ENCODE measurements at regions of chr4 and their contacts with region 1.

Region 1: DNA sequence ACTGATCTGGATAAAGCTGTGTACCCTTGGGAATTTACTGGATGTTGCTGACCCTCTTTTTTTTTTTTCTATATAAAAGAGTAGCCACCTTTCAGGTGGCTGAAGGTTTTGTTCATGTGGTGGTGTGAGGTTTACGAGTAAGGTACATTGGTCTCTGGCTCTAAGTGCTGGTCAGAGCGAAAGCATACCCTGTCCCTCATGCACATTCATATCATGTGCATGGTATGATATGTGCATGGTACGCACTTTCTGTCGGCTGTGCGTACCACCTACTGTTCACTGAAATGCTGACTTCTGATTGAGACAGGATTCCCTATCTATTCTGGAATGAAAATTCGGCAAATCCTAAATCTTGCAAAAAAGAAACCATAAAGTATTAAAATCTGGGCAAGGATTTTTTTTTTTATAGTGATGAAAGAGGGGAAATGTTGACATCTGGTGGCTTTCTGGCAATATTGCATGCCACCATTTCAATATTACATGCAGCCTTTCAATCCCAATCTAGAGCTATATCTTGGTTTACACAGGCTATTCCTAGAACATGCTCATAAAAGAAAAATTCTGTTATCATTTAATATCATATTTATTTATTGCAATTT is 32.8 kb downstream of the FAM149A start:
- DNase-seq: no peak
- ATAC-seq: peak; percentile 54
- H3K4me3 ChIP-seq: no peak overlapping the region
- H3K27ac ChIP-seq: no peak overlapping the region
- H3K4me1 ChIP-seq: peaks cover 15% of the 10 kb centered on the region
- H3K27me3 ChIP-seq: no peaks in the 10 kb centered on the region
- CTCF ChIP-seq: peak; percentile 45 to 68 (median 66); a peak in 5 of 6 replicates
- EP300 ChIP-seq: no peak
- POLR2A ChIP-seq: no peak
- RAD21 ChIP-seq: peak; percentile 74

Region 2: GRCh38 chr4:186037692-186038658 is 99.3 kb before region 1 on chr4:
- CTCF ChIA-PET with region 1: interaction called, 11 read pairs
- POLR2A ChIA-PET with region 1: no interaction called
- RAD21 ChIA-PET with region 1: interaction called, 3 read pairs
- SMC1A ChIA-PET with region 1: interaction called, 6 read pairs
- in situ Hi-C with region 1: no loop called
- intact Hi-C with region 1: loop called (anchors 5 kb)
- DNase-seq: peak; percentile 36
- ATAC-seq: peak; percentile 84
- H3K4me3 ChIP-seq: no peak overlapping the region
- H3K27ac ChIP-seq: no peak overlapping the region
- H3K4me1 ChIP-seq: no peaks in the 10 kb centered on the region
- H3K27me3 ChIP-seq: peaks cover 0 to 2% of the 10 kb centered on the region in 2 experiments; a peak in 2 of 4 replicates
- CTCF ChIP-seq: peak; percentile 58 to 81 (median 74); a peak in 5 of 6 replicates
- EP300 ChIP-seq: no peak
- POLR2A ChIP-seq: no peak
- RAD21 ChIP-seq: peak; percentile 81

Region 3: DNA sequence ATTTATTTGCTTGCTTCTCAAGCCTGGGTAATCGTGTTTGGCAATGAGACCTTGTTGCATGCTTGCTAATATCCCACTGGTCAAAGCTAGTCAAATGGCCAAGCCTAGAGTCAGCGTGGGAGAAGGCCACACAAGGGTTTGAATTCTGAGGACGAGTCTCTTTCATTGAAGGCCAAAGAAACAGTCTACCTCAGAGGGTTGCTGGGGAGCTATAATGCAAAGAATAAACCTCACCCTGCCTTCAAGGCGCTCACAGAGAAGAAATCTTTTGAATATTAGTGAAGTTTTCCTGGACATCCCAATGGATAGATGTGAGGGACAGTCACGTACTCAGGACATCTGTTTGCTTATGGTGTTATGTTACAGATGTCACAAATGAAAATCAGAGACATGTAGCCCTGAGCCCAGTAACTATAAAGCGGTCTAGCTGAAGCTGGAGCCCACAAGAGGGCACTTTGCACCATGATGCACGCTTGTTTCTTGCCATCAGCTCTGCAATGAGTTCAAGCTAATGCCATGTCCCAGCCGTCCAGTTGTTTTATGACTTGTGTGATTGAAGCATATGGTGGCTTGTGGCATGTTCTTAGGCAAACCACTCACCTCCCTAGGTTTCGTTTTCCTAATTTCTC is 69.4 kb before region 1 on chr4:
- CTCF ChIA-PET with region 1: interaction called, 38 read pairs
- POLR2A ChIA-PET with region 1: no interaction called
- RAD21 ChIA-PET with region 1: interaction called, 5 read pairs
- SMC1A ChIA-PET with region 1: interaction called, 16 read pairs
- in situ Hi-C with region 1: loop called (anchors 5 kb)
- intact Hi-C with region 1: loop called (anchors 1 kb)
- DNase-seq: peak; percentile 25
- ATAC-seq: peak; percentile 94
- H3K4me3 ChIP-seq: no peak overlapping the region
- H3K27ac ChIP-seq: no peak overlapping the region
- H3K4me1 ChIP-seq: no peaks in the 10 kb centered on the region
- H3K27me3 ChIP-seq: peaks cover 0 to 3% of the 10 kb centered on the region in 2 experiments; a peak in 2 of 4 replicates
- CTCF ChIP-seq: peak; percentile 54 to 55 (median 55); a peak in 5 of 6 replicates
- EP300 ChIP-seq: no peak
- POLR2A ChIP-seq: no peak
- RAD21 ChIP-seq: peak; percentile 60